Activated naive CD4-positive, alpha-beta T cell treated with anti-CD3 and anti-CD28 coated beads for 36 hours (primary cell): ENCODE measurements at regions of chr13 and their contacts with region 1.

Region 1: DNA sequence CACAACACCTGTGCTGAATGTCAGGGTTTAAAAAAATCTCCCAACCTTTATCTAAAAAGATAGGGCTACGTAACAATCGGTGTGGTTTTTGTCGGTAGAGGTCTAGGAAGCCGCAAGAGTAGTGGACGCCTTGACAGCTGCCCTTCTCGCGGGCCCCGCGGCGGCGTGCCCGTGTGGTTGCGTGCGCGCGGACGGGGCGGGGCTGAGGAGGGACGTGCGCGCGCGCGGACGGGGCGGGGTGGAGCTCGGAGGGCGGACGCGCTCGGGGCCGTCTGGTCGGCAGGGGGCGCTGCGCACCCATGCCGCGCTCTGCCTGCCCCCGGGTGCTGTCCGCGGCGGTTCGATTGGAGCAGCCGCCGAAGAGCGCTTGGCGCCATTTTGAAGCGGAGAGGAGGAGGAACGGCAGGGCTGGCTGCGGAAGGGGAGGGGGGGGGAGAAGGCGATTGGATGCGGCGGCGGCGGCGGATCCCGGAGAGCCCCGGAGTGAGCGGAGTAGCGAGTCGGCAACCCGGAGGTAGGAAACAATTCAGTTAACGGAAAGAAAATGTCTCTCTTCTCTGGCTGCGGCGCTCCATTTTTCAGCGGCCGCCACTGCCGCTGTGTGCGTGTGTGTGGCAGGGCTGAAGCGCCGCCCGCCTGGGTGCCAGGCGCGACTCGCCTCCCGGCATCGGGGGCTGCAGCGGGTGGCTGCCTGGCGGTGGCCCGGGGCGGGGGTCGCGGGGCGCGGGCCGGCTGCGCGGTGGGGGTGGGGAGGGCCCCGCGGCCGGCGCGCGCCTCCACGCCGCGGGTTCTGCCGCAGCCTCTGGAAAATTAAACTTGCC is at the start of gene PDS5B:
- DNase-seq: peak; percentile 95
- H3K4me3 Mint-ChIP-seq: peak within 1 kb of the TSS; percentile 95
- H3K27ac Mint-ChIP-seq: peak within 1 kb of the TSS; percentile 91
- H3K4me1 Mint-ChIP-seq: peaks cover 36% of the 10 kb centered on the region
- H3K27me3 Mint-ChIP-seq: no peaks in the 10 kb centered on the region
- total RNA-seq, gene PDS5B: 48.0 to 51.6 TPM

Region 2: GRCh38 chr13:31697290-31697689 is 889.0 kb before region 1 on chr13:
- CTCF ChIA-PET with region 1: no interaction called
- intact Hi-C with region 1: no loop called
- DNase-seq: no peak
- H3K4me3 Mint-ChIP-seq: no peak overlapping the region
- H3K27ac Mint-ChIP-seq: no peak overlapping the region
- H3K4me1 Mint-ChIP-seq: no peaks in the 10 kb centered on the region
- H3K27me3 Mint-ChIP-seq: peaks cover 2% of the 10 kb centered on the region

Region 3: GRCh38 chr13:32315238-32316027 is 270.9 kb before region 1 on chr13 and contains the starts of genes BRCA2 and ZAR1L:
- CTCF ChIA-PET with region 1: interaction called, 7 read pairs
- intact Hi-C with region 1: loop called (anchors 1 kb)
- DNase-seq: peak; percentile 91
- H3K4me3 Mint-ChIP-seq: peak within 1 kb of the TSS; percentile 92
- H3K27ac Mint-ChIP-seq: peak within 1 kb of the TSS; percentile 98
- H3K4me1 Mint-ChIP-seq: peaks cover 12% of the 10 kb centered on the region
- H3K27me3 Mint-ChIP-seq: no peaks in the 10 kb centered on the region
- total RNA-seq, gene BRCA2: 17.3 to 21.3 TPM
- total RNA-seq, gene ZAR1L: not detected

Region 4: GRCh38 chr13:32548837-32549236 is 37.5 kb before region 1 on chr13:
- CTCF ChIA-PET with region 1: no interaction called
- intact Hi-C with region 1: no loop called
- DNase-seq: no peak
- H3K4me3 Mint-ChIP-seq: no peak overlapping the region
- H3K27ac Mint-ChIP-seq: no peak overlapping the region
- H3K4me1 Mint-ChIP-seq: no peaks in the 10 kb centered on the region
- H3K27me3 Mint-ChIP-seq: peaks cover 3% of the 10 kb centered on the region

Region 5: GRCh38 chr13:32639502-32640105 is 53.3 kb after region 1 on chr13:
- CTCF ChIA-PET with region 1: interaction called, 31 read pairs
- intact Hi-C with region 1: loop called (anchors 1 kb)
- DNase-seq: peak; percentile 64
- H3K4me3 Mint-ChIP-seq: no peak overlapping the region
- H3K27ac Mint-ChIP-seq: no peak overlapping the region
- H3K4me1 Mint-ChIP-seq: peaks cover 31% of the 10 kb centered on the region
- H3K27me3 Mint-ChIP-seq: no peaks in the 10 kb centered on the region

Region 6: GRCh38 chr13:32669030-32669646 is 82.8 kb after region 1 on chr13:
- CTCF ChIA-PET with region 1: interaction called, 16 read pairs
- intact Hi-C with region 1: loop called (anchors 1 kb)
- DNase-seq: peak; percentile 10
- H3K4me3 Mint-ChIP-seq: no peak overlapping the region
- H3K27ac Mint-ChIP-seq: no peak overlapping the region
- H3K4me1 Mint-ChIP-seq: peaks cover 6% of the 10 kb centered on the region
- H3K27me3 Mint-ChIP-seq: no peaks in the 10 kb centered on the region

Region 7: DNA sequence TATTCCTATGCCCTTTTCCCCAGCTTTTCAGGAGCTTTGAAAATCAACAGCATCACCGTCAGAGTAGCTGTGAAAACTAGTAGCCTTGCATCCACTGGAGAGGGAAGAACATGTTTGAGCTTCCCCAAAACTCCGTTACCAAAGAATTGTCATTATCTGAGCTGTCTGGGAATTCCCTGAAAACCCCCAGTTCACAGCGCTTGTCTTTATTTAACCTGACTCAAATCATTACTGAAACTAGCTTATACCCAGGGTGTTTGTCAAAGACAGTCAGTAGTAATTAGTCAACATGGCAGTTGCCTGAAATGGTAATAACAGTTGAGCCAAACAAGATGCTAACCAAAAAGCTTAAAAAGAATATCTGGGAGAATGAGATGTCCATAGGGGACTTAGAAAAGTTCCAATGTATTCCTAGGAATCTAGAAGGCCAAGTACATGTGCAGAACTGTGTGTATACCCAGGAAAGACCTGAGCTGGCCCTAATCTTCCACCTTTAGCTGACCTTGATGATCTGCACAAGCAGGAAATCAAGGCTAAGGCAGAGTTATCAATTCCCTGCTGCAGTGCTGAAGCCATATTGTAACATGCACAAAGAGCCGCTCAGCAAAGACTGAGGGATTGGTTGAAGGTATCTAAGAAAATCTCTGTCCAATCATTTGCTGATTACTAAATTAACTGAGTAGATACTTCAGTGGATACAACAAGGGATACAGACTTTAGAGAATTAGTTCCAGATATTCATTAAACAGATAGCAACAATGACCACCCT is 560.7 kb after region 1 on chr13:
- CTCF ChIA-PET with region 1: no interaction called
- intact Hi-C with region 1: loop called (anchors 1 kb)
- DNase-seq: peak; percentile 38
- H3K4me3 Mint-ChIP-seq: no peak overlapping the region
- H3K27ac Mint-ChIP-seq: no peak overlapping the region
- H3K4me1 Mint-ChIP-seq: peaks cover 9% of the 10 kb centered on the region
- H3K27me3 Mint-ChIP-seq: peaks cover 17% of the 10 kb centered on the region

Region 8: DNA sequence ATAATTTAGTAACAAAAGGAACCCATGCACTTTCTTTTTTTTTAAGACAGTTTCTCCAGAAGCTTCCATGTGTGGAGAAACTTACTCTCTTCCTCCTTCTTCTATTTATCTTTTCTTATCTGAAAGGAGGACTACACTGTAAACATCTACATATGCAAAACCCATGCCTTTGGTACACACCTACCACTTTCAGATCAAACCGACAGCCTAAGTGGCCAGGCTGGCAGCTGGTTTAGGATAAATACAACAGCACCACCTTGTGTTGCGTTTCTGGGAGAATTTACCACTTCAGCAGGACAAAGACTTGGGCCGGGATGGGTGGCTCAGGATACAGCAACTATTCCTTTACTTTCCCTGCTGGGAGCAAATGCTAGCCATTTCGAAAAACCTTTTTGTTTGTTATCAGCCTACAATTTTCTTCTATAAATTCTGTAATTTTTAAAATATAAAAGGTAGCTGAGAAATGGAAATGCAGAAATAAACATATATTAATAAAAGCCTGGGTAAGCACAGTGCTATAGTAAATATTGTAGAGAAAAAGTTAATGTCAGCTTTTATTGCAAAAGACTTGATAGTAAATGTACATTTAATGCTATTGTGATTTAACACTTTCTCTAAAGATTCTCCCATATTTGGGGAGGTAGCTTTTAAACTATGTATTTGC is 1137.6 kb after region 1 on chr13:
- CTCF ChIA-PET with region 1: no interaction called
- intact Hi-C with region 1: loop called (anchors 10 kb)
- DNase-seq: peak; percentile 82
- H3K4me3 Mint-ChIP-seq: no peak overlapping the region
- H3K27ac Mint-ChIP-seq: no peak overlapping the region
- H3K4me1 Mint-ChIP-seq: peaks cover 27% of the 10 kb centered on the region
- H3K27me3 Mint-ChIP-seq: no peaks in the 10 kb centered on the region